T-cell (primary cell): ENCODE measurements at regions of chr17 and their contacts with region 1.

Region 1: GRCh38 chr17:27601069-27601975 is 29.7 kb upstream of the LGALS9 start:
- DNase-seq: peak; percentile 37 to 88 (median 74)
- ATAC-seq: peak; percentile 36 to 46 (median 42)
- H3K4me3 ChIP-seq: no peak overlapping the region
- H3K4me3 Mint-ChIP-seq: no peak overlapping the region
- H3K27ac ChIP-seq: no peak overlapping the region
- H3K27ac Mint-ChIP-seq: no peak overlapping the region
- H3K4me1 ChIP-seq: peaks cover 0 to 9% of the 10 kb centered on the region in 2 experiments
- H3K4me1 Mint-ChIP-seq: peaks cover 0 to 5% (median 4%) of the 10 kb centered on the region in 3 donors
- H3K27me3 ChIP-seq: no peaks in the 10 kb centered on the region
- H3K27me3 Mint-ChIP-seq: no peaks in the 10 kb centered on the region

Region 2: DNA sequence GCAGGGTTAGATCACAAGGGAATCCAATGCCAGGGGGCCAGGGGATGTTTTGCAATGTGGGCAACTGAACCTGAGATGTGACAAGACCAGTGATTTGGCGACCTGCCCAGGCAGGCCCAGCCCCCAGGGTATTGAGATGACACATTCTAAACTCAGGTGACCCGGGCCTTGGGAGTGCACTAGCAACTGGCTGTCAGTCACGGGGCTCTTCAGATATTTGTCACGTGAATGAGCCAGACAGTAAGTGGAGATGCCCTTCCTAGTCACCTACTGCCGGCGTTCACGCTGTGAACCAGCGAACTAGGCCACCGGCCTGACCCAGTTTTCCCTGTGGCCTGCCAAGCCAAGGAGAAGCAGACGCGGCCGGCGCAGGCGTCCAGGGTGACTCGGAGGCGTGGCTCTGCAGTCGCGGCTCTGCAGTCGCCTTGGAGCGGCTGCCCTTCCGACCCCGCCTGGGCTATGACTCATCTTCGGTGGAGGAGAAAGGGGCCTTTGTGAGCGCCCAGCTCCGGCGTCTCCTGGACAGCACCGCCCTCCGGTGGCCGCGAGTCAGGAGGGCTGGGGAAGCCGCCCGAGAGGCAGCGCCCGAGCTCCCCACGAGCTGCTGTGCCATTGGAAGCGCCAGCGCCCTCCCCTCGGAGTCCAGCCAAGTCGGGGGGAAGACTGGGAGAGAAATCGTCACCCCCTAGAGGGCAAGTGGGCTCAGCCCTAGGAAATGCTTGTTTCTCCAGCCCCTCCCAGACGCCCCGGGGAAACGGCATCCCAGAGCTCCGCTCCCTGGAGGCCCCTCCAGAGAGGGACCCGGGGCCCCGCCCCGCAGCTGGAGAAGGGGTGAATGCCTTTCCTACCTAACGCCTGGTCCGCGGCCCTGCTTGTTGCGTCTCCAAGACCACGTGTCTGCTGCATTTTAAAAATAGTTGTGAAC is 268.6 kb before region 1 on chr17:
- CTCF ChIA-PET with region 1: interaction called, 9 to 11 read pairs
- POLR2A ChIA-PET with region 1: no interaction called
- DNase-seq: peak; percentile 70 to 92 (median 81)
- ATAC-seq: peak; percentile 87 to 92 (median 91)
- H3K4me3 ChIP-seq: peak overlapping the region; percentile 54 to 71
- H3K4me3 Mint-ChIP-seq: peak overlapping the region; percentile 75 to 84 (median 77)
- H3K27ac ChIP-seq: peak overlapping the region; percentile 74
- H3K27ac Mint-ChIP-seq: peak overlapping the region; percentile 82 to 84
- H3K4me1 ChIP-seq: peaks cover 3 to 18% of the 10 kb centered on the region in 2 experiments
- H3K4me1 Mint-ChIP-seq: peaks cover 19 to 24% (median 24%) of the 10 kb centered on the region in 3 donors
- H3K27me3 ChIP-seq: no peaks in the 10 kb centered on the region
- H3K27me3 Mint-ChIP-seq: peaks cover 0 to 4% of the 10 kb centered on the region in 2 donors

Region 3: DNA sequence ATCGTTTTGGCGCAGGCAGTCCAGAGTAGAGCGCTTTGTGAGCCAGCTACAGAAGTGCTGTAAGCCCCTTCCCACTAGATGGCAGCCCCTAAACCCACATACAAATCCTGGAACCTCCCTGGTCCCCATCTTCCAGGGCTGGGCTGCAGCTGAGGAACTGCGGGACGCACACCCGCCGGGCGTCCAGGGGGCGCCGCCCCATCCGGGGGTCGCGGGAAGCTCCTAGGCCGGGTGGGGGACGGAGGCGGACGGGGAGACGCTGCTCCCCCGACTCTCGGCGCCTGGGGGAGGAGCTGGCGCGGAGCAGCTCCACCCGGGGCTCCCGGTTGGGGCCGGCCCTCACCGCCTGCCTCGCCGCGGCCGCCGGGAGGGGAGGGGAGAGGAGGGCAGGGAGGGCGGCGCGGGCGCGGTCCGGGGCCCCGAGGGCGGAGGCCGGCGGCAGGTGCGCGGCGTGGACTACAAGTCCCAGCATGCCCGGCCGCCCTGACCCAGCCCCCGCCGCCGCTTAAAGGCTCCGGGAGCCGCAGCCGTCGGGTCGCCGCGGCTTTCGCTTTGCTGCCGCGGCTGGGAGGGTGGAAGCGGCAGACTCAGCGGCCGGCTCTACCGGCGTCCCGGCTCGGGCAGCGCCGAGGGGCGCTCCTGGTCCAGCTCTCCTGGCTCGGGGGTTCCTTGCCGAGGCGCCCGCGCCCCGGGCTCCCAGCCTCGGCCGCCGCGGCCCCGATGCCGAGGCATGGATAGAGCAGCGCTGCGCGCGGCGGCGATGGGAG is 145.2 kb before region 1 on chr17 and contains the start of gene KSR1:
- CTCF ChIA-PET with region 1: interaction called, 4 to 16 read pairs
- POLR2A ChIA-PET with region 1: no interaction called
- DNase-seq: peak; percentile 59 to 88 (median 72)
- ATAC-seq: peak; percentile 93 to 96 (median 94)
- H3K4me3 ChIP-seq: peak within 1 kb of the TSS; percentile 60 to 74
- H3K4me3 Mint-ChIP-seq: peak within 1 kb of the TSS; percentile 81 to 95 (median 91)
- H3K27ac ChIP-seq: peak within 1 kb of the TSS; percentile 47
- H3K27ac Mint-ChIP-seq: peak within 1 kb of the TSS; percentile 49 to 83
- H3K4me1 ChIP-seq: peaks cover 0 to 25% of the 10 kb centered on the region in 2 experiments
- H3K4me1 Mint-ChIP-seq: peaks cover 17 to 31% (median 23%) of the 10 kb centered on the region in 3 donors
- H3K27me3 ChIP-seq: peaks cover 0 to 2% of the 10 kb centered on the region in 2 experiments
- H3K27me3 Mint-ChIP-seq: no peaks in the 10 kb centered on the region
- total RNA-seq, gene KSR1: 26.8 to 35.8 (median 27.6) TPM

Region 4: DNA sequence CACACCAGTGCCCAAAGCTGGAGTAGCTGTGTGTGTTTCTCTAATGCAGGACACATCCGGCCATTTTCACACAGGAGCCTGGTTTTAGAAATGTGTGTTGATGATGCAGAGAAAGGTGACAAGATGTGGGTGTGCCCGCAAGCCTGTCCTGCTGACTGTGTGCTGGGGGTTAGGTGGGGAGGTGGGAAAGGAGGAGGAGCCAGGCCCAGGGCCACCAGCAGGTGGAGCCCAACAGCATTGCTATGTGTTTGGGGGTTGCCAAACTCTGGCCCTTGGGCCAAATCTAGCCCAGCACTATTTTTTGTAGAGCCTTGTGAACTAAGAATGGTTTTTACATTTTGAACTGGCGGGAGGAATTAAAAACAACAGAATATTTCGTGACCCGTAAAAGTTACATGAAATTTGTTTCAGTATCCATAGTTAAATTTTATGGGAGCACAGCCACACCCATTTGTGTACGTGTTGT is 32.0 kb before region 1 on chr17:
- CTCF ChIA-PET with region 1: interaction called in 1 of 2 experiments, 10 read pairs
- POLR2A ChIA-PET with region 1: no interaction called
- DNase-seq: peak in 34 of 35 experiments; percentile 14 to 72 (median 51)
- ATAC-seq: peak; percentile 53 to 78 (median 69)
- H3K4me3 ChIP-seq: no peak overlapping the region
- H3K4me3 Mint-ChIP-seq: no peak overlapping the region
- H3K27ac ChIP-seq: peak overlapping the region; percentile 27
- H3K27ac Mint-ChIP-seq: peak overlapping the region in 1 of 2 donors; percentile 71
- H3K4me1 ChIP-seq: peaks cover 0 to 21% of the 10 kb centered on the region in 2 experiments
- H3K4me1 Mint-ChIP-seq: peaks cover 0 to 17% (median 11%) of the 10 kb centered on the region in 3 donors
- H3K27me3 ChIP-seq: no peaks in the 10 kb centered on the region
- H3K27me3 Mint-ChIP-seq: no peaks in the 10 kb centered on the region

Region 5: DNA sequence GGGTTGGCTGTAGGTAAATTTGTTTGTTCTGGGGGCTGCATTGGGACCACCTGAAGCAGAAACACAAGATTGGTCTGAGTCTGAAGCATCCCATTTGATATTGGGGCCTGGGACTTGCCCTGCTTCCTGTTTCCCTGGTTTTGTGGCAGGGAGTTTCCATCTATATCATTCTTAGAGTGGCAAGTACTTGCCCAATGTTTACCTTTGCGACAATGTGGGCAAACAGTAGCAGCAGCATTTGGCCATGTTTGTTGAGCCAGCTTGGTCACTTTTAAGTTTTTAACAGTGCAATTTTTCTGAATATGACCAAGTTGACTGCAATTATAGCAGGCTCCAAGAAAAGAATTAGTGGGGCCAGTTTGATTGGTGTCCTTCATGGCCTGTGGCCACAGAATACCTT is 91.4 kb after region 1 on chr17:
- CTCF ChIA-PET with region 1: no interaction called
- POLR2A ChIA-PET with region 1: no interaction called
- DNase-seq: no peak
- ATAC-seq: no peak
- H3K4me3 ChIP-seq: no peak overlapping the region
- H3K4me3 Mint-ChIP-seq: no peak overlapping the region
- H3K27ac ChIP-seq: no peak overlapping the region
- H3K27ac Mint-ChIP-seq: no peak overlapping the region
- H3K4me1 ChIP-seq: no peaks in the 10 kb centered on the region
- H3K4me1 Mint-ChIP-seq: no peaks in the 10 kb centered on the region
- H3K27me3 ChIP-seq: no peaks in the 10 kb centered on the region
- H3K27me3 Mint-ChIP-seq: peaks cover 8 to 10% of the 10 kb centered on the region in 2 donors

Region 6: DNA sequence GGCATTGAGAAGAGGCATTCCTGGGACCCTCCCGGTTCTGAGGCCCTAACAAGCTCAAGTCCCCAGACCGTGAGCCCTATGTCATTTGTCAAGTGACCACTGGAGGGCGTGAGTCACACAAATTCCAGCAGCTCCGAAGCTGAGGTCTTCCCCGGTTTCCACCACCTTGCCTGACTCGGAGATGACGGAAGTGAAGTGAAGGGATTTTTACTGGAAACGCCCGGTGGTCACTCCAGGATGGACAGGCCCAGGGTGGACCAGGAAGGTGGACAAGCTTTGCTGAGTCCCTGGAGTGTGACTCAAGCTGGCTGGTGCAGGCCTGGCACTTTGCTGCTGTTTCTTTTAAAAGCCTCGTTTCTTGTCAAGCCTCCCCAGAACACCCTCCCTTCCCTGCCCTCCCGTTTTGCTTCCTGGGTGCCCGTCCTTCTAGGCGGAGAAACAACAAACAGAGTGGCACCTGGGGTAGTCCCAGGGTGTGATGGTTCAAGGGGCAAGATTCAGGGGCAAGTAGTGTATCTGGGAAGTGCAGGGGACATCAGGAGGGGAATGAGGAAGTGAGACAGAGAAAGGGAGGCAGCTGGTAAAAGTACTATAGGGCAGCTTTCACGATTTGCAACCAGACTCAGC is 204.3 kb after region 1 on chr17:
- CTCF ChIA-PET with region 1: no interaction called
- POLR2A ChIA-PET with region 1: no interaction called
- DNase-seq: peak; percentile 56 to 92 (median 74)
- ATAC-seq: peak; percentile 64 to 77 (median 66)
- H3K4me3 ChIP-seq: peak overlapping the region; percentile 50 to 66
- H3K4me3 Mint-ChIP-seq: peak overlapping the region; percentile 66 to 87 (median 78)
- H3K27ac ChIP-seq: peak overlapping the region; percentile 65
- H3K27ac Mint-ChIP-seq: peak overlapping the region; percentile 91 to 93
- H3K4me1 ChIP-seq: peaks cover 0 to 35% of the 10 kb centered on the region in 2 experiments
- H3K4me1 Mint-ChIP-seq: peaks cover 31 to 46% (median 41%) of the 10 kb centered on the region in 3 donors
- H3K27me3 ChIP-seq: no peaks in the 10 kb centered on the region
- H3K27me3 Mint-ChIP-seq: peaks cover 0 to 2% of the 10 kb centered on the region in 2 donors